Gastrocnemius medialis (tissue), 4 donors: ENCODE measurements at regions of chr12 and their contacts with region 1.

Region 1: GRCh38 chr12:119444456-119445044 is 110.0 kb downstream of the CCDC60 start:
- DNase-seq: peak; percentile 16 to 49
- ATAC-seq: peak in 1 of 2 donors; percentile 54
- H3K4me3 ChIP-seq: no peak overlapping the region
- H3K27ac ChIP-seq: no peak overlapping the region
- H3K4me1 ChIP-seq: no peaks in the 10 kb centered on the region
- H3K27me3 ChIP-seq: no peaks in the 10 kb centered on the region
- CTCF ChIP-seq: peak; percentile 69 to 86 (median 84)
- POLR2A ChIP-seq: no peak

Region 2: DNA sequence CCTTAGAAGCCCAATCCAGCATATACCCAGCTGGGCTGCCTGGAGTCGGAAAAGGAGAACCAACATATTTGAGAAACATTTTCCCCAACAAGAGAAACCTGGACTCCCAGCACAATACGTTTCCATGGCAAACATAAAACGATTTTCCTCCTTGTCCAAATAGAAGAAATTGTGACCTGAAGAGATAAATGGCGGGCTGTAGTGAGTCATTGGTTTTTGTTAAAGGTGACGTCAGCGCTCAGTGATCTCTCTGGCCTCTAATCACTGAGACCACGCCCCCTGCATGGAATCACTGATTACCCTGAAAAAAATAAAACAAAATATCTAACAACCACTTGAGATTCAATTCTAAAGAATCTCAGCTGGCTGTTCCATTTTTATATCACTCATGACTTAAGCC is 104.0 kb before region 1 on chr12:
- in situ Hi-C with region 1: no loop called
- intact Hi-C with region 1: no loop called
- DNase-seq: no peak
- ATAC-seq: no peak
- H3K4me3 ChIP-seq: no peak overlapping the region
- H3K27ac ChIP-seq: no peak overlapping the region
- H3K4me1 ChIP-seq: no peaks in the 10 kb centered on the region
- H3K27me3 ChIP-seq: peaks cover 8 to 11% (median 10%) of the 10 kb centered on the region in 3 donors
- CTCF ChIP-seq: no peak
- POLR2A ChIP-seq: no peak

Region 3: GRCh38 chr12:119399301-119399700 is 45.2 kb before region 1 on chr12:
- in situ Hi-C with region 1: no loop called
- intact Hi-C with region 1: no loop called
- DNase-seq: no peak
- ATAC-seq: no peak
- H3K4me3 ChIP-seq: no peak overlapping the region
- H3K27ac ChIP-seq: no peak overlapping the region
- H3K4me1 ChIP-seq: no peaks in the 10 kb centered on the region
- H3K27me3 ChIP-seq: peaks cover 0 to 3% (median 0%) of the 10 kb centered on the region in 3 donors
- CTCF ChIP-seq: no peak
- POLR2A ChIP-seq: no peak

Region 4: DNA sequence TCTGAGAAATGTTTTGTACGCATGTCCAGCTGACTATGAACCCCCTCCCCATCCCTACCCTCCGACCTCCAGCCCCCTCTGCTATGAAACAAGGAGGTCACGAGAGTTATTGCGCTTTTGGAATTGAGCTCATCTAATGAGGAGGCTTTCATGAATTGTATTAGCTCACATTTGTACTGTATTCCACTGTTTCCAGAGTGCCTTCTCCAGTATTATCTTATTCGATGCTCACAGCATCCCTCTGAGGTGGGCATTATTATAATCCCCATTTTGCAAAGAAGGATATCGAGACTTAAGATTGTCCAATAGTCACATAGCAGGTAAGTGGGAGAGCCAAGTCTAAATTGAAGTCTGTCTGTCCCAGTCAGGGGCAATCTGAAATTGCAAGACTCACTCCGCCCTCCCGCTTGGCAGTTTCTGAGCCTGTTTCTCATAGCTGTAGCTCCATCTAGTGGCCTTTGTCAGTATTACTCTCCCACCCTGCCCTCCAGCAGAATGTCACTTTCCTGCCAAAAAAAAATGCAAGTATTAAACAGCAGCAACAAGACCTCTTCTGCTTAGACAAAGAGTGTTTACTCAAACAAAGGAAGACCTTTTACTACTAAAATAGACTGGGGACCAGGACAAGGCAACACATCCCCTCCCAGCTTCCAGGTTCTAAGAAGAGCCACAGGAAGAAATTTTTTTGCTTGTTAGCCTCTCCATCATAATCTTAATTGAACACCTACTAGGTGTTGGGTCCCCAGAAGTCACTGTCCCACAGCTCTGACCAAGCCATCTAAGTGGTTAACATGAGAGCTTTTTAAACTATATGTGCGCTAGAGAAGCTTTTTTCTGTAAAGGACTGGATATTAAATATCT is 100.4 kb after region 1 on chr12:
- in situ Hi-C with region 1: loop called in 1 of 4 experiments (anchors 10 kb)
- intact Hi-C with region 1: no loop called
- DNase-seq: peak; percentile 38 to 47
- ATAC-seq: peak; percentile 54 to 81
- H3K4me3 ChIP-seq: no peak overlapping the region
- H3K27ac ChIP-seq: no peak overlapping the region
- H3K4me1 ChIP-seq: no peaks in the 10 kb centered on the region
- H3K27me3 ChIP-seq: no peaks in the 10 kb centered on the region
- CTCF ChIP-seq: peak; percentile 69 to 87 (median 81)
- POLR2A ChIP-seq: no peak

Region 5: GRCh38 chr12:119649202-119649808 is 204.8 kb after region 1 on chr12:
- in situ Hi-C with region 1: loop called in 2 of 4 experiments (anchors 10 to 25 kb)
- intact Hi-C with region 1: loop called (anchors 5 kb)
- DNase-seq: no peak
- ATAC-seq: no peak
- H3K4me3 ChIP-seq: no peak overlapping the region
- H3K27ac ChIP-seq: no peak overlapping the region
- H3K4me1 ChIP-seq: peaks cover 4 to 5% of the 10 kb centered on the region in 2 donors
- H3K27me3 ChIP-seq: no peaks in the 10 kb centered on the region
- CTCF ChIP-seq: peak; percentile 46 to 77 (median 69)
- POLR2A ChIP-seq: no peak

Region 6: GRCh38 chr12:119659289-119659897 is 214.8 kb after region 1 on chr12:
- in situ Hi-C with region 1: loop called in 3 of 4 experiments (anchors 10 to 25 kb)
- intact Hi-C with region 1: loop called (anchors 2 kb)
- DNase-seq: no peak
- ATAC-seq: peak in 1 of 2 donors; percentile 39
- H3K4me3 ChIP-seq: no peak overlapping the region
- H3K27ac ChIP-seq: no peak overlapping the region
- H3K4me1 ChIP-seq: no peaks in the 10 kb centered on the region
- H3K27me3 ChIP-seq: no peaks in the 10 kb centered on the region
- CTCF ChIP-seq: peak; percentile 58 to 94 (median 74)
- POLR2A ChIP-seq: no peak